Activated CD8-positive, alpha-beta T cell treated with anti-CD3 and anti-CD28 coated beads, Interleukin-2, amount 10 ng/mL, durations not matched to agents 7 days and 5 days (primary cell): ENCODE measurements at regions of chr3 and their contacts with region 1.

Region 1: GRCh38 chr3:14124615-14125190 is at the starts of genes CHCHD4 and TMEM43:
- DNase-seq: peak; percentile 99
- ATAC-seq: peak; percentile 90
- H3K4me3 Mint-ChIP-seq: peak within 1 kb of the TSS; percentile 93
- H3K27ac Mint-ChIP-seq: peak within 1 kb of the TSS; percentile 90
- H3K4me1 Mint-ChIP-seq: peaks cover 61% of the 10 kb centered on the region
- H3K27me3 Mint-ChIP-seq: no peaks in the 10 kb centered on the region
- total RNA-seq, gene CHCHD4: 17.3 to 18.1 TPM
- total RNA-seq, gene TMEM43: 27.9 to 28.8 TPM

Region 2: GRCh38 chr3:13972679-13973379 is 151.9 kb before region 1 on chr3:
- CTCF ChIA-PET with region 1: no interaction called
- POLR2A ChIA-PET with region 1: no interaction called
- DNase-seq: no peak
- ATAC-seq: no peak
- H3K4me3 Mint-ChIP-seq: no peak overlapping the region
- H3K27ac Mint-ChIP-seq: no peak overlapping the region
- H3K4me1 Mint-ChIP-seq: no peaks in the 10 kb centered on the region
- H3K27me3 Mint-ChIP-seq: no peaks in the 10 kb centered on the region

Region 3: DNA sequence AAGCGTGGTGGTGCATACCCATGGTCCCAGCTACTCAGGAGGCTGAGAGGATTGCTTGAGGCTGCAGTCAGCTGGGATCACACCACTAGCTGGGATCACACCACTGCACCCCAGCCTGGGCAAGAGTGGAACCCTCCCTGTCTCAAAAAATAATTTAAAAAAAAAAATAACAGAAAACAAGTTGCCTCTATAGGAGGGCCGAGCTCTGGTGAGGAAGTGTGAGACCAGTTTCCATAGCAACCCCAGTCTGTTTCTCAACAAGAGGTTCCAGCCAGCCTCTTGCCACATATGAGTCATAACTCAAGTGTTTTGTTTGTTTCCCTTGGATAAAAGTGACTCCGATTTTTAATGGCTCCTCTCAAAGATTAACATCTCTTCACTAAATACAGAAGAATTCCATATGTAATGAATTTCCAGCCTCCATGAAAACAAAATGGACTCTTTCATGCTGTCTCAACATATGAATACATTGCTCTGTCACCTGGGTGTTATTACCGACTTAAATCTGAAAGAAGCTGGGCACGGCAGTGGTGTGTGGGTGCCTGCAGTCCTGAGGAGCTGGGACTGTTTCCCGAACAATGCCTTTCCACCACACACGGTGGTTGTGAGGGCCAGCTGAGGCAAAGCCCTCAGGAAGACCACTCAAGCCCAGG is 19.8 kb after region 1 on chr3:
- CTCF ChIA-PET with region 1: interaction called, 17 read pairs
- POLR2A ChIA-PET with region 1: interaction called, 55 read pairs
- DNase-seq: peak; percentile 86
- ATAC-seq: peak; percentile 85
- H3K4me3 Mint-ChIP-seq: peak overlapping the region; percentile 52
- H3K27ac Mint-ChIP-seq: peak overlapping the region; percentile 88
- H3K4me1 Mint-ChIP-seq: peaks cover 36% of the 10 kb centered on the region
- H3K27me3 Mint-ChIP-seq: no peaks in the 10 kb centered on the region